Pancreas (tissue), 10 donors: ENCODE measurements at regions of chr12 and their contacts with region 1.

Region 1: GRCh38 chr12:39300799-39301198 is 142.1 kb downstream of the KIF21A start:
- DNase-seq: no peak
- ATAC-seq: no peak
- H3K4me3 ChIP-seq: no peak overlapping the region
- H3K27ac ChIP-seq: no peak overlapping the region
- H3K4me1 ChIP-seq: no peaks in the 10 kb centered on the region
- H3K27me3 ChIP-seq: no peaks in the 10 kb centered on the region
- CTCF ChIP-seq: no peak

Region 2: GRCh38 chr12:38872561-38872960 is 428.2 kb before region 1 on chr12:
- intact Hi-C with region 1: no loop called
- DNase-seq: no peak
- ATAC-seq: no peak
- H3K4me3 ChIP-seq: no peak overlapping the region
- H3K27ac ChIP-seq: no peak overlapping the region
- H3K4me1 ChIP-seq: no peaks in the 10 kb centered on the region
- H3K27me3 ChIP-seq: no peaks in the 10 kb centered on the region
- CTCF ChIP-seq: no peak

Region 3: DNA sequence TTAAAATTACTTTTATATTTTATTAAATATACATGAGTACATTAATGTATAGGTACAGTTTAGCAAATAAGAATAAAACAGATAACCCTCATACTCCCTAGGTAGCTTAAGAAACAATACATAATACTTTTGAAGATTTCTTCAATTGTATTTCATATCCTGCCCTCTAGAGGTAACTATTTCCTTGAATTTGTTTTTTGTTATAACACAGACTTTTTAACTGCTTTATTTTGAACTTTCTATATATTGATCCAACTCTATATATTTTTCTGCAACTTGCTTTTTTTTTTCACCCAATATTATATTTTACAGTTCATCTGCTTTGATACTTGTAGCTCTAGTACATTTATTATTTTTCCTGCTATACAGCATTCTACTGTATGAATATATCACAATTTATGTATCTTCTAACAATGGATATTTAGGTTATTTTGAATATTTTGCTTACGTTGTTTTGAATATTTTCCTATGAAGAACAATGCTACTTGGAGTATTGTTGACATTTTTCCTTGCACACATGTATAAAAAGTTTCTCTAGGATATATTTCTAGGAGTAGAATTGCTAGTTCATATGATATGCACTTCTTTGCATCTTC is 391.6 kb after region 1 on chr12:
- intact Hi-C with region 1: loop called in 1 of 3 experiments (anchors 10 kb)
- DNase-seq: no peak
- ATAC-seq: peak in 1 of 4 donors; percentile 44
- H3K4me3 ChIP-seq: no peak overlapping the region
- H3K27ac ChIP-seq: no peak overlapping the region
- H3K4me1 ChIP-seq: no peaks in the 10 kb centered on the region
- H3K27me3 ChIP-seq: no peaks in the 10 kb centered on the region
- CTCF ChIP-seq: no peak